CD8-positive, alpha-beta memory T cell (primary cell): ENCODE measurements at regions of chr22 and their contacts with region 1.

Region 1: GRCh38 chr22:24791362-24791761 is 14.6 kb upstream of the SGSM1 start:
- DNase-seq: no peak
- H3K4me3 ChIP-seq: no peak overlapping the region
- H3K4me3 Mint-ChIP-seq: no peak overlapping the region
- H3K27ac ChIP-seq: no peak overlapping the region
- H3K27ac Mint-ChIP-seq: no peak overlapping the region
- H3K4me1 ChIP-seq: no peaks in the 10 kb centered on the region
- H3K4me1 Mint-ChIP-seq: no peaks in the 10 kb centered on the region
- H3K27me3 ChIP-seq: no peaks in the 10 kb centered on the region
- H3K27me3 Mint-ChIP-seq: peaks cover 4 to 16% of the 10 kb centered on the region in 2 donors

Region 2: GRCh38 chr22:24685531-24686190 is 105.7 kb before region 1 on chr22:
- CTCF ChIA-PET with region 1: no interaction called
- POLR2A ChIA-PET with region 1: no interaction called
- DNase-seq: no peak
- H3K4me3 ChIP-seq: no peak overlapping the region
- H3K4me3 Mint-ChIP-seq: no peak overlapping the region
- H3K27ac ChIP-seq: no peak overlapping the region
- H3K27ac Mint-ChIP-seq: no peak overlapping the region
- H3K4me1 ChIP-seq: no peaks in the 10 kb centered on the region
- H3K4me1 Mint-ChIP-seq: no peaks in the 10 kb centered on the region
- H3K27me3 ChIP-seq: peaks cover 10% of the 10 kb centered on the region
- H3K27me3 Mint-ChIP-seq: peaks cover 24 to 69% of the 10 kb centered on the region in 2 donors

Region 3: DNA sequence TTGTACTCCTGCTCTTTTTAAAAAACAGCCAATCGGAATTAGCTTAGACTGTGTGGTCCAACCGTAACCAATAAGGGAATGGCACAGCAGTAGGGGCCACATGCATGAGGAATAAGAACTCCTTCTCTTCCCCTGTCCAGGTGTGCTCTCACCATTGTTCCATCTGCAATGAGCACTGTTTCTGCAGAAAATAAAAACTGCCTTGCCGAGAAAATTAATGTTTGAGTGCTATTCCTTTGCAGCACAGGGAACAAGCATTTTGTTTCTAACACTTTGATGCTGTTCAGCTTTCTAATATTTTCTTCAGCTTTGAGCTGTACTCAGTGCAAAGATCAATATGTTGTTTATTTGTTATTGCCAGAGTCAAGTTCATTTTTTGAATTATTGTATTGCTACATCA is 74.8 kb before region 1 on chr22:
- CTCF ChIA-PET with region 1: no interaction called
- POLR2A ChIA-PET with region 1: no interaction called
- DNase-seq: no peak
- H3K4me3 ChIP-seq: no peak overlapping the region
- H3K4me3 Mint-ChIP-seq: no peak overlapping the region
- H3K27ac ChIP-seq: no peak overlapping the region
- H3K27ac Mint-ChIP-seq: no peak overlapping the region
- H3K4me1 ChIP-seq: no peaks in the 10 kb centered on the region
- H3K4me1 Mint-ChIP-seq: no peaks in the 10 kb centered on the region
- H3K27me3 ChIP-seq: no peaks in the 10 kb centered on the region
- H3K27me3 Mint-ChIP-seq: peaks cover 11 to 42% of the 10 kb centered on the region in 2 donors

Region 4: GRCh38 chr22:24744638-24745037 is 46.7 kb before region 1 on chr22:
- CTCF ChIA-PET with region 1: no interaction called
- POLR2A ChIA-PET with region 1: no interaction called
- DNase-seq: no peak
- H3K4me3 ChIP-seq: no peak overlapping the region
- H3K4me3 Mint-ChIP-seq: no peak overlapping the region
- H3K27ac ChIP-seq: no peak overlapping the region
- H3K27ac Mint-ChIP-seq: no peak overlapping the region
- H3K4me1 ChIP-seq: no peaks in the 10 kb centered on the region
- H3K4me1 Mint-ChIP-seq: no peaks in the 10 kb centered on the region
- H3K27me3 ChIP-seq: no peaks in the 10 kb centered on the region
- H3K27me3 Mint-ChIP-seq: peaks cover 16 to 61% of the 10 kb centered on the region in 2 donors

Region 5: GRCh38 chr22:24768537-24769374 is 22.6 kb before region 1 on chr22:
- CTCF ChIA-PET with region 1: no interaction called
- POLR2A ChIA-PET with region 1: no interaction called
- DNase-seq: peak in 4 of 5 donors; percentile 11 to 50 (median 19)
- H3K4me3 ChIP-seq: no peak overlapping the region
- H3K4me3 Mint-ChIP-seq: no peak overlapping the region
- H3K27ac ChIP-seq: no peak overlapping the region
- H3K27ac Mint-ChIP-seq: no peak overlapping the region
- H3K4me1 ChIP-seq: no peaks in the 10 kb centered on the region
- H3K4me1 Mint-ChIP-seq: no peaks in the 10 kb centered on the region
- H3K27me3 ChIP-seq: no peaks in the 10 kb centered on the region
- H3K27me3 Mint-ChIP-seq: peaks cover 3 to 24% of the 10 kb centered on the region in 2 donors

Region 6: GRCh38 chr22:24803011-24803542 is 11.7 kb after region 1 on chr22:
- CTCF ChIA-PET with region 1: interaction called, 15 read pairs
- POLR2A ChIA-PET with region 1: no interaction called
- DNase-seq: peak; percentile 26 to 60 (median 52)
- H3K4me3 ChIP-seq: no peak overlapping the region
- H3K4me3 Mint-ChIP-seq: peak overlapping the region in 2 of 7 donors; percentile 34 to 38
- H3K27ac ChIP-seq: no peak overlapping the region
- H3K27ac Mint-ChIP-seq: peak overlapping the region in 2 of 8 donors; percentile 26 to 75
- H3K4me1 ChIP-seq: no peaks in the 10 kb centered on the region
- H3K4me1 Mint-ChIP-seq: peaks cover 13 to 17% (median 14%) of the 10 kb centered on the region in 3 donors
- H3K27me3 ChIP-seq: no peaks in the 10 kb centered on the region
- H3K27me3 Mint-ChIP-seq: peaks cover 0 to 1% of the 10 kb centered on the region in 2 donors